MCF 10A (cell line): ENCODE measurements at regions of chr1 and their contacts with region 1.

Region 1: GRCh38 chr1:164611754-164612642 is 53.0 kb downstream of the PBX1 start:
- DNase-seq: peak; percentile 99
- H3K4me3 Mint-ChIP-seq: peak overlapping the region; percentile 62
- H3K27ac Mint-ChIP-seq: peak overlapping the region; percentile 55
- H3K4me1 Mint-ChIP-seq: peaks cover 25% of the 10 kb centered on the region
- H3K27me3 Mint-ChIP-seq: no peaks in the 10 kb centered on the region
- CTCF ChIP-seq: no peak

Region 2: GRCh38 chr1:163535807-163536206 is 1076.2 kb before region 1 on chr1:
- CTCF ChIA-PET with region 1: interaction called, 12 read pairs
- POLR2A ChIA-PET with region 1: interaction called, 3 read pairs
- intact Hi-C with region 1: no loop called
- DNase-seq: peak; percentile 60
- H3K4me3 Mint-ChIP-seq: no peak overlapping the region
- H3K27ac Mint-ChIP-seq: no peak overlapping the region
- H3K4me1 Mint-ChIP-seq: no peaks in the 10 kb centered on the region
- H3K27me3 Mint-ChIP-seq: peaks cover under 1% of the 10 kb centered on the region
- CTCF ChIP-seq: peak; percentile 47

Region 3: DNA sequence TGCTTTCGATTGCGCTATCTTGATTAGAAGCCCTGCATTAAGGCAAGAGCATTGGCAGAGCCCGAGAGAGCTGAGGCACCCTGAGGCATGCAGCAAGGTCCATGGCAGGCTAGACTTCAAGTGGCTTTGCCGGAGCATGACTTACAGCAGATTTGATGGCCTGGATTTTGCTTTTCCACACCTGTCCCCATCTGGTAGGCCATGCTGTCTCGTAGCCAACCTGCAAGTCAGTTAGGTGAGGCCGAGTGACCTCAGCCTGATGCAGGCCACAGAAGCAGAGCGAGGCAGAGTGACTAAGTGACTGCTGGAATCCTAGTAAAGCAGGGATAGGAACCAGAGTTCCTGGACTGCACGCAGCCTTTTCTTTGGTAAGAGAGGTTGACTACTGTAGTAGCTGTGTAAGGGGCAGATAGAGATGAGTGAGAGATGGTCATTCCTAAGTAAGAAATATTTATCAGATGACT is 95.9 kb after region 1 on chr1:
- CTCF ChIA-PET with region 1: interaction called, 4 read pairs
- POLR2A ChIA-PET with region 1: interaction called, 13 read pairs
- intact Hi-C with region 1: no loop called
- DNase-seq: peak; percentile 67
- H3K4me3 Mint-ChIP-seq: no peak overlapping the region
- H3K27ac Mint-ChIP-seq: peak overlapping the region; percentile 70
- H3K4me1 Mint-ChIP-seq: peaks cover 22% of the 10 kb centered on the region
- H3K27me3 Mint-ChIP-seq: no peaks in the 10 kb centered on the region
- CTCF ChIP-seq: no peak

Region 4: GRCh38 chr1:164780863-164781262 is 168.9 kb after region 1 on chr1:
- CTCF ChIA-PET with region 1: interaction called, 23 read pairs
- POLR2A ChIA-PET with region 1: interaction called, 14 read pairs
- intact Hi-C with region 1: no loop called
- DNase-seq: peak; percentile 66
- H3K4me3 Mint-ChIP-seq: no peak overlapping the region
- H3K27ac Mint-ChIP-seq: peak overlapping the region; percentile 2
- H3K4me1 Mint-ChIP-seq: peaks cover 34% of the 10 kb centered on the region
- H3K27me3 Mint-ChIP-seq: no peaks in the 10 kb centered on the region
- CTCF ChIP-seq: no peak